ENCODE measurements at regions of chr11 and their contacts with region 1.

Region 1: DNA sequence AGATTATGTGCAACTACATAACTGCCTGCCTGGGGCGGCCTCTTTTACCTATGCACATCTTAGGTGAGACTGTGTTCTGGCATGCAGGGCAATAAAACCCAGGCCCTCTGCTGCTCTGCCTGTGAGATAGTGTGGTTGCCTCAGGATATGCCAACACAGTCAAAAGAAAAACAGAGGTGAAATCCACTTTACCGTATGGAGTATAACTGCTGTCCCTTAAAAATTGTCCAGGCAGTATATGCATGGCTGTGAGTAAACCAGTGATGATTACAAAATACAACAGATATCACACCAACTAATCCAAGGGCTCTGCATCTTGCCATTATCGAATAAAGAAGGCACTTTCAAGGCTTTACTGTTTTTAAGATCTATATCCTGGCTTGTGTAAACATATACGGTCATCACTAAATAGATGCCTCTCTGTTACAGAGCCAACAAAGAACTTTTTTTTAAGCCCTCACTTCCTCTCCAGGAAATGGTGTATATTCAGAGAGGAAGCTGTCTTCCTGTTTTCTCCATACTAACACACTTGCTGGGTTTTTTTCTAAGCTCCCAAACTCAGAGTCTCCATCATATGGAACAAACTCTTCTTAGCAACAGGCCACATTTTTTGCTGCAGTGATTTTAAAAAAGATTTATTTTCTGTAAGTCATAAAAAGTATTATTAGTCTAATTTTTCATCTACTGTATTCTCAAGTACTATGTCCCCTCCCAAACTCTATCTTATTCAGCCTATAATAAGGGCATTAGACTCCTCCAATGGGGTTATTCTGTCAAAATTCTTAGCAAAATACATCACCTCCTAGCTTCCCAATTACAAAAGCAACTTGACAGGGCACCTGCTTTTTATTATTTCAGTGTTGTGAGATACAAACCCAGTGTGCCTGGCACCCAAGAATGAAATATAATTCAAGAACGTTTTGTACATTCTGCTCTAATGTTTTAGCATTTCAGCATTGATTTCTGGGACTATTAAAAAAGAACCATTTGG is 135.2 kb downstream of the MAML2 start:
- DNase-seq: peak; percentile 49
- H3K4me3 Mint-ChIP-seq: peak overlapping the region; percentile 40
- H3K27ac Mint-ChIP-seq: peak overlapping the region; percentile 98
- H3K4me1 Mint-ChIP-seq: peaks cover 88% of the 10 kb centered on the region
- H3K27me3 Mint-ChIP-seq: no peaks in the 10 kb centered on the region

Region 2: DNA sequence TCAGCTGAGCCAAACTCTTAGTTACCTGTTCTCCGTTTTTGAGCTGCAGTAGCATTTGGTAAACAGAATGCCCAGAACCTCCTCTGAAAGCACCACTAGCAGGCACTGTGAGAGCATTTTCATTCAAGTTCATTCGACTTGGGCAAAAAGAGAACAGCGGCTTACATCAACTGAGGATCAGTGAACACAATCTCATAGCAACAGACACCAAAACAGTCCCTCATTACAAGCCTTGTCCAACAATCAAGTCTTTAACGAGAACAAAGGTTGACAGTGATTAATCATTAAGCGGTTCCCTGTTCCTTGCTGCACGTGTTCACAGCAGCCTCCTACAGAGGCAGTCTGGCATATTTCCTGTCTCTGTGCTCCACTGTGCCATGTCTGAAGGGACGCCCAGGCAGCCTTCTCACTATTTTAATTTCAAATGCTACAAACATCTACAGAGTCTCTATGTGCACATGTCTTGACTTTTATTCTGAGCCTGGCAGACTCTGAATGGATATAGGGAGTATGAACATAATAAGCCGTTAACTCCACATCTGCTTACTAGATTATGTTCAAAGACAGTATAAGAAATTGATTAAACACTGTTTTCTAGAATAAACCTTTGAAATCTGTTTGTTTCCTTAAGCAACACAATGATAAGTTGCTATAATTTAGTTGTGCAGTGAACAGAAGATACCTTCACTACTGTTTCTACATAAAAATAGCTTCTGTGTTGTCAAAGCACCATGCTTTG is 195.5 kb before region 1 on chr11:
- CTCF ChIA-PET with region 1: no interaction called
- intact Hi-C with region 1: loop called (anchors 2 kb)
- DNase-seq: peak; percentile 67
- H3K4me3 Mint-ChIP-seq: peak overlapping the region; percentile 52
- H3K27ac Mint-ChIP-seq: peak overlapping the region; percentile 72
- H3K4me1 Mint-ChIP-seq: peaks cover 69% of the 10 kb centered on the region
- H3K27me3 Mint-ChIP-seq: no peaks in the 10 kb centered on the region

Region 3: GRCh38 chr11:96075532-96075959 is 132.2 kb before region 1 on chr11:
- CTCF ChIA-PET with region 1: no interaction called
- intact Hi-C with region 1: loop called (anchors 1 kb)
- DNase-seq: peak; percentile 63
- H3K4me3 Mint-ChIP-seq: peak overlapping the region; percentile 2
- H3K27ac Mint-ChIP-seq: peak overlapping the region; percentile 93
- H3K4me1 Mint-ChIP-seq: peaks cover 85% of the 10 kb centered on the region
- H3K27me3 Mint-ChIP-seq: no peaks in the 10 kb centered on the region

Region 4: GRCh38 chr11:96188243-96189006 is 19.3 kb before region 1 on chr11:
- CTCF ChIA-PET with region 1: interaction called, 7 read pairs
- intact Hi-C with region 1: loop called (anchors 1 kb)
- DNase-seq: peak; percentile 49
- H3K4me3 Mint-ChIP-seq: peak overlapping the region; percentile 38
- H3K27ac Mint-ChIP-seq: peak overlapping the region; percentile 92
- H3K4me1 Mint-ChIP-seq: peaks cover 90% of the 10 kb centered on the region
- H3K27me3 Mint-ChIP-seq: no peaks in the 10 kb centered on the region

Region 5: DNA sequence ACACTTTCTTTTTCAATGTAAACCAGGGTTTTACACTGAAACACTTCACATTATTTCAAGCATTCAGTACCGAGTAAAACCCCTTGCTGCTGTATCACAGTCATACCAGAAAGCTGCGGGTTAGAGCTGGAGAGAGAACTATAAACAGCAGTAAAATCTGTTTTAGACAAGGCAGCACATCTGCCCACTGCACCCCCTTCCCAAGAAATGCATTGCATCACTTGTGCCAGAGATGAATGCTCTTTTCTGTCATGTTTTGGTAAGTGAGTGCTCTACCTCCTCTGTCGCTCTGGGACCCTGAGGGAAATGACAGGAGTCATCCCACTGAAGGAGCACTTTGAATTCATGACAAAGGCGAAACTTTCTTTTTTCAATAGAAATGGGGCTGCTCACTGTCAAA is 28.0 kb after region 1 on chr11:
- CTCF ChIA-PET with region 1: no interaction called
- intact Hi-C with region 1: loop called (anchors 1 kb)
- DNase-seq: peak; percentile 89
- H3K4me3 Mint-ChIP-seq: peak overlapping the region; percentile 38
- H3K27ac Mint-ChIP-seq: peak overlapping the region; percentile 90
- H3K4me1 Mint-ChIP-seq: peaks cover 24% of the 10 kb centered on the region
- H3K27me3 Mint-ChIP-seq: no peaks in the 10 kb centered on the region

Region 6: GRCh38 chr11:96254087-96254486 is 46.3 kb after region 1 on chr11:
- CTCF ChIA-PET with region 1: no interaction called
- intact Hi-C with region 1: loop called (anchors 1 kb)
- DNase-seq: peak; percentile 49
- H3K4me3 Mint-ChIP-seq: peak overlapping the region; percentile 58
- H3K27ac Mint-ChIP-seq: peak overlapping the region; percentile 77
- H3K4me1 Mint-ChIP-seq: peaks cover 89% of the 10 kb centered on the region
- H3K27me3 Mint-ChIP-seq: no peaks in the 10 kb centered on the region

Measured in activated naive CD4-positive, alpha-beta T cell treated with anti-CD3 and anti-CD28 coated beads for 36 hours (primary cell).